ENCODE measurements at regions of chr7 and their contacts with region 1.

Region 1: DNA sequence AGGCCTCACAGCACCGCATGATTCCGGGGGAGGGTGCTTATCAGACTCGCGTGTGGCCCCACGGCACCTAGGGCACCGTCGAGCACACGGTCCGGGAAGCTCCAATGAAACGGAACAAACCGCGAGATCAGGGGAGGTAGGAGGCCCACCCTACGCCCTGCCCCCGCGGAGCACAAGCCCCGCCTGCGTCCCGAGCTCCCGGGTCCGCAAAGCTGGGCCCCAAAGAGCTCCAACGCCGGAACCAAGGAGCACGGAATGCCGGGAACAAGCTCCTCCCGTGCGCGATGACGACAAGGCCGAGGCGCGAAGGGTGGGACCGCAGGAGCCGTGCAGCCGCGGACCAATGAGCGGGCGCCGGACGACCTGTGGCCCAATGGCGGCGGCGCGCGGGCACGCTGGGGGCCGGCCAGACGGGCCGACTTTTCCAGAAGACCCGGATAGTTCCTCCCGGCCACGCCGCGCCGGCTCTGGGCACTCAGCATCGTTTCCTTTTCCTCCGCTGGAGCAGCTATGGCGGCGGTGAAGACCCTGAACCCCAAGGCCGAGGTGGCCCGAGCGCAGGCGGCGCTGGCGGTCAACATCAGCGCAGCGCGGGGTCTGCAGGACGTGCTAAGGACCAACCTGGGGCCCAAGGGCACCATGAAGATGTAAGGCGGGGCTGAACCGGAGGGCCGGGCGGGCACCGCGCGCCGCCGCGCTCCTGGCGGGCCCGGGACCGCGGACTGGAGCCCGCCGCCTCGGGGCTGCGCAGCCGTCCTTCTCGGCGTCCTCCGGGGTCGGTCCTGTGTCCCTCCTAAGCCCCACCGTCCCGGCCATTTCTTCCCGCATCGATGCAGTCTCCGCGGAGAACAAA is at the starts of genes CCT6A and PSPH:
- DNase-seq: peak; percentile 96
- ATAC-seq: peak; percentile 94
- H3K4me3 ChIP-seq: peak within 1 kb of the TSS; percentile 81 to 98 (median 91)
- H3K27ac ChIP-seq: peak within 1 kb of the TSS; percentile 87
- H3K4me1 ChIP-seq: peaks cover 79% of the 10 kb centered on the region
- H3K27me3 ChIP-seq: no peaks in the 10 kb centered on the region; a peak in 1 of 5 replicates
- CTCF ChIP-seq: peak; percentile 8; the same call in 1 of the 2 replicates
- EP300 ChIP-seq: peak in 1 of 2 experiments; percentile 12; a peak in 1 of 4 replicates
- POLR2A ChIP-seq: peak; percentile 80
- RAD21 ChIP-seq: no peak; the same call in 1 of the 2 replicates
- total RNA-seq, gene CCT6A: 292 and 425 TPM in 2 replicates
- total RNA-seq, gene PSPH: 124 and 175 TPM in 2 replicates

Region 2: GRCh38 chr7:55903985-55904759 is 147.4 kb before region 1 on chr7:
- CTCF ChIA-PET with region 1: no interaction called
- POLR2A ChIA-PET with region 1: no interaction called
- in situ Hi-C with region 1: no loop called
- intact Hi-C with region 1: no loop called
- DNase-seq: no peak
- ATAC-seq: no peak
- H3K4me3 ChIP-seq: no peak overlapping the region
- H3K27ac ChIP-seq: no peak overlapping the region
- H3K4me1 ChIP-seq: no peaks in the 10 kb centered on the region
- H3K27me3 ChIP-seq: no peaks in the 10 kb centered on the region
- CTCF ChIP-seq: no peak
- EP300 ChIP-seq: no peak
- POLR2A ChIP-seq: no peak
- RAD21 ChIP-seq: no peak

Region 3: GRCh38 chr7:55996856-55997500 is 54.6 kb before region 1 on chr7:
- CTCF ChIA-PET with region 1: no interaction called
- POLR2A ChIA-PET with region 1: interaction called, 15 read pairs
- in situ Hi-C with region 1: no loop called
- intact Hi-C with region 1: no loop called
- DNase-seq: peak; percentile 91
- ATAC-seq: peak; percentile 87
- H3K4me3 ChIP-seq: no peak overlapping the region; a peak in 1 of 6 replicates
- H3K27ac ChIP-seq: peak overlapping the region; percentile 64
- H3K4me1 ChIP-seq: peaks cover 53% of the 10 kb centered on the region
- H3K27me3 ChIP-seq: no peaks in the 10 kb centered on the region
- CTCF ChIP-seq: 0 out of 2 replicates have a peak, but pooled peaks have one; percentile 11
- EP300 ChIP-seq: peak; percentile 32 to 33; a peak in 1 of 4 replicates
- POLR2A ChIP-seq: no peak
- RAD21 ChIP-seq: no peak

Region 4: GRCh38 chr7:56009695-56010094 is 41.9 kb before region 1 on chr7:
- CTCF ChIA-PET with region 1: no interaction called
- POLR2A ChIA-PET with region 1: interaction called, 82 read pairs
- in situ Hi-C with region 1: no loop called
- intact Hi-C with region 1: loop called (anchors 1 kb)
- DNase-seq: peak; percentile 65
- ATAC-seq: peak; percentile 5; the same call in 2 of the 3 replicates
- H3K4me3 ChIP-seq: no peak overlapping the region
- H3K27ac ChIP-seq: peak overlapping the region; percentile 65
- H3K4me1 ChIP-seq: peaks cover 63% of the 10 kb centered on the region
- H3K27me3 ChIP-seq: no peaks in the 10 kb centered on the region
- CTCF ChIP-seq: no peak
- EP300 ChIP-seq: no peak
- POLR2A ChIP-seq: peak in 1 of 2 experiments; percentile 47; a peak in 1 of 4 replicates
- RAD21 ChIP-seq: no peak

Region 5: GRCh38 chr7:56033671-56034432 is 17.7 kb before region 1 on chr7:
- CTCF ChIA-PET with region 1: interaction called, 3 read pairs
- POLR2A ChIA-PET with region 1: interaction called, 106 read pairs
- in situ Hi-C with region 1: no loop called
- intact Hi-C with region 1: loop called (anchors 1 kb)
- DNase-seq: peak; percentile 88
- ATAC-seq: peak; percentile 89
- H3K4me3 ChIP-seq: peak overlapping the region; percentile 77 to 98 (median 80)
- H3K27ac ChIP-seq: peak overlapping the region; percentile 87
- H3K4me1 ChIP-seq: peaks cover 45% of the 10 kb centered on the region
- H3K27me3 ChIP-seq: no peaks in the 10 kb centered on the region; a peak in 1 of 5 replicates
- CTCF ChIP-seq: peak; percentile 34
- EP300 ChIP-seq: no peak
- POLR2A ChIP-seq: peak; percentile 66 to 85
- RAD21 ChIP-seq: peak; percentile 10; the same call in 1 of the 2 replicates

Region 6: DNA sequence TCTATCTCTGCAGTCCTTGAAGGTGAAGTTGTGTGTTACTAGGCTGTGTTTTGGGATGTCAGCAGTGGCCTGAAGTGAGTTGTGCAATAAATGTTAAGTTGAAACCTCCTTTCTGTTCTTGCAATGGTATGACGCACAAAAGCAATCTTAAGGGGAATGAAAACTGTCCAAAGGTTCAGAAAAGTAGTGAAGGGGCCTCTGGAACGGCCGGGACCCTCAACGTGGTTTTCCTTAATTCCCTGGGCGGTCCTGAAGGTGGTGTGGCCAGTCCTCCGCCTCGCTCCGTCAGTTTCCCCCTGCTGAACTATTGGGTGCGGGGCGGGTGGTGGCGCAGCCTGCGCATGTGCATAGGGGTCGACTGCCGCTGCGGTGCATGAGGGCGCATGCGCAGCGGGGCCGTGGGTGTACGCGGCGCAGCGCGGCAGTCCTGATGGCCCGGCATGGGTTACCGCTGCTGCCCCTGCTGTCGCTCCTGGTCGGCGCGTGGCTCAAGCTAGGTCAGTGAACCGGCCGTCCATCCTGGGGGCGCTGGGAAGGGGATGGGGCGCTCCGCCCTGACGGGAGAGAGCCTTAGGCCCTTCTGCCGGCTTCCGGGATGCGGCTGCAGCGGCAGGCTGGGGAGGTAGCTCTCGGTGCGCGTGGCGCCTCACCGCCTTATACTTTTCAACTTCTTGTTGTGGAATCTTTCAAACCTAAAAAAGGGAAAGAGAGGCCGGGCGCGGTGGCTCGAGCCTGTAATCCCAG is 12.5 kb after region 1 on chr7 and contains the start of gene SUMF2:
- CTCF ChIA-PET with region 1: no interaction called
- POLR2A ChIA-PET with region 1: interaction called, 144 read pairs
- in situ Hi-C with region 1: no loop called
- intact Hi-C with region 1: loop called (anchors 1 kb)
- DNase-seq: peak; percentile 83
- ATAC-seq: peak; percentile 97
- H3K4me3 ChIP-seq: peak within 1 kb of the TSS; percentile 59 to 91 (median 79); a peak in 5 of 6 replicates
- H3K27ac ChIP-seq: peak within 1 kb of the TSS; percentile 90
- H3K4me1 ChIP-seq: peaks cover 63% of the 10 kb centered on the region
- H3K27me3 ChIP-seq: no peaks in the 10 kb centered on the region
- CTCF ChIP-seq: peak; percentile 63
- EP300 ChIP-seq: no peak
- POLR2A ChIP-seq: peak; percentile 71 to 92
- RAD21 ChIP-seq: peak; percentile 69
- total RNA-seq, gene SUMF2: 22.4 and 54.4 TPM in 2 replicates

Region 7: DNA sequence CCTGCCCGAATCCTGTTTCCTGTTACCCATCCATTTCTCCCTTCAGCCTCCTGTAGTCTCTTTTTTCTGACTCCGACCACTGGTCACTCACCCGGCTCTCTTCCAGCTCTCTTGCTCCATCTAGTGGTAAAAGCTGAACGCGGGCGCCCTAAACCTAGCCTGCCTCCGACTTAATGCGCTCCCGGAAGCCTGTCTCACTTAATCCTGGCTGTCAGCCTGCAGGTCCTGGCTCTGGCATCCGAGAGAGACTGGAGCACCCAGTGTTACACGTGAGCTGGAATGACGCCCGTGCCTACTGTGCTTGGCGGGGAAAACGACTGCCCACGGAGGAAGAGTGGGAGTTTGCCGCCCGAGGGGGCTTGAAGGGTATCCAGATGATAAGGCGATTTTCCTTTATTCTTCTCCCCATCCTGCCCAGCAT is 22.8 kb after region 1 on chr7:
- CTCF ChIA-PET with region 1: no interaction called
- POLR2A ChIA-PET with region 1: interaction called, 12 read pairs
- in situ Hi-C with region 1: no loop called
- intact Hi-C with region 1: no loop called
- DNase-seq: peak; percentile 68
- ATAC-seq: peak; percentile 94
- H3K4me3 ChIP-seq: no peak overlapping the region
- H3K27ac ChIP-seq: no peak overlapping the region
- H3K4me1 ChIP-seq: peaks cover 18% of the 10 kb centered on the region
- H3K27me3 ChIP-seq: no peaks in the 10 kb centered on the region
- CTCF ChIP-seq: peak; percentile 93
- EP300 ChIP-seq: no peak
- POLR2A ChIP-seq: no peak
- RAD21 ChIP-seq: peak; percentile 92

Region 8: GRCh38 chr7:56097700-56098099 is 46.1 kb after region 1 on chr7:
- CTCF ChIA-PET with region 1: no interaction called
- POLR2A ChIA-PET with region 1: no interaction called
- in situ Hi-C with region 1: no loop called
- intact Hi-C with region 1: no loop called
- DNase-seq: no peak
- ATAC-seq: no peak
- H3K4me3 ChIP-seq: no peak overlapping the region
- H3K27ac ChIP-seq: no peak overlapping the region
- H3K4me1 ChIP-seq: peaks cover 9% of the 10 kb centered on the region
- H3K27me3 ChIP-seq: no peaks in the 10 kb centered on the region
- CTCF ChIP-seq: no peak
- EP300 ChIP-seq: no peak
- POLR2A ChIP-seq: no peak; a peak in 1 of 4 replicates
- RAD21 ChIP-seq: no peak

Measured in HepG2 (cell line).